ENCODE measurements at regions of chr10 and their contacts with region 1.

Region 1: GRCh38 chr10:80444646-80445319 is 9.3 kb upstream of the TSPAN14 start:
- DNase-seq: peak in 4 of 5 donors; percentile 73 to 83 (median 78)
- H3K4me3 ChIP-seq: no peak overlapping the region
- H3K4me3 Mint-ChIP-seq: peak overlapping the region in 2 of 8 donors; percentile 21 to 32
- H3K27ac ChIP-seq: no peak overlapping the region
- H3K27ac Mint-ChIP-seq: peak overlapping the region; percentile 47 to 88 (median 79)
- H3K4me1 ChIP-seq: peaks cover 32% of the 10 kb centered on the region
- H3K4me1 Mint-ChIP-seq: peaks cover 26 to 60% (median 46%) of the 10 kb centered on the region in 4 donors
- H3K27me3 ChIP-seq: no peaks in the 10 kb centered on the region
- H3K27me3 Mint-ChIP-seq: no peaks in the 10 kb centered on the region

Region 2: DNA sequence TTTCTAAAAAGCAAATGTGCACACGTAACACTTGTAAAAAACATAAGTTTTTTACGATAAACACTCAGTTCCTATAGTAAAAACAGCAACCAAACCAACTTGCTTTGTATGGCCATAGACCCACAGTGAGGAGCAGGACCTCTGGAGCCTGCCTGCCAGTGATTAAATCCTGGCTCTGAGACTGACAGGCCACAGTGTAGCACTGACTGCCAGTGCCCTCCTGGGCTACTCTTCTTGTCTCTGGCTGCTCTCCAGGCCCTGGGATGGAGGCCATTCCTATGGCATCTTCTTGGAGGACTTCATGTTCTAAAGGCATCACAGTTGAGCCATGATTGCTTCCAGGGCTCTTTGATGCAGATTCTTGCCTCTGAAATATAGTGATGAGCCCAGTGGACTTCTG is 389.0 kb before region 1 on chr10:
- CTCF ChIA-PET with region 1: no interaction called
- POLR2A ChIA-PET with region 1: no interaction called
- intact Hi-C with region 1: no loop called
- DNase-seq: no peak
- H3K4me3 ChIP-seq: no peak overlapping the region
- H3K4me3 Mint-ChIP-seq: no peak overlapping the region
- H3K27ac ChIP-seq: no peak overlapping the region
- H3K27ac Mint-ChIP-seq: peak overlapping the region in 1 of 7 donors; percentile 17
- H3K4me1 ChIP-seq: no peaks in the 10 kb centered on the region
- H3K4me1 Mint-ChIP-seq: peaks cover 0 to 10% (median 5%) of the 10 kb centered on the region in 4 donors
- H3K27me3 ChIP-seq: no peaks in the 10 kb centered on the region
- H3K27me3 Mint-ChIP-seq: peaks cover 0 to under 1% of the 10 kb centered on the region in 2 donors

Region 3: GRCh38 chr10:80260295-80261243 is 184.2 kb before region 1 on chr10:
- CTCF ChIA-PET with region 1: no interaction called
- POLR2A ChIA-PET with region 1: no interaction called
- intact Hi-C with region 1: no loop called
- DNase-seq: peak in 4 of 5 donors; percentile 17 to 30 (median 26)
- H3K4me3 ChIP-seq: no peak overlapping the region
- H3K4me3 Mint-ChIP-seq: no peak overlapping the region
- H3K27ac ChIP-seq: no peak overlapping the region
- H3K27ac Mint-ChIP-seq: no peak overlapping the region
- H3K4me1 ChIP-seq: no peaks in the 10 kb centered on the region
- H3K4me1 Mint-ChIP-seq: no peaks in the 10 kb centered on the region
- H3K27me3 ChIP-seq: no peaks in the 10 kb centered on the region
- H3K27me3 Mint-ChIP-seq: peaks cover 1 to 11% of the 10 kb centered on the region in 2 donors

Region 4: DNA sequence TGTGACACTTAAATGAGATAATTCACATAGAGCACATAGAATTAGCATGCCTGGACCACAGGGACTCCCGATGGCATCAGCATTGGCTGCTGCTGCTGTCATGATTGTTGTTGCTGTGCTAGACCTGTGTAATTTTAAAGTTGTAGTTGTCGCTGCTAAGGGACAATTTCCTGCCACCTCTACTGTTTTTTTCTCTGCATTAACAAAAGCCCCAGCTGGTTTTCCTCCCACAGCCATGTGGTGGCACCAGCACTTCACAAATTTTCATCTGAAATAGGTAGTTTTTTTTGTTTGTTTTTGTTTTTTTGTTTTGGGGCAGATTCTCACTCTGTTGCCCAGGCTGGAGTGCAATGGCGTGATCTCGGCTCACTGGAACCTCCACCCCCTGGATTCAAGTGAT is 61.8 kb before region 1 on chr10:
- CTCF ChIA-PET with region 1: interaction called, 14 read pairs
- POLR2A ChIA-PET with region 1: interaction called, 4 read pairs
- intact Hi-C with region 1: loop called (anchors 1 kb)
- DNase-seq: peak in 4 of 5 donors; percentile 50 to 69 (median 62)
- H3K4me3 ChIP-seq: no peak overlapping the region
- H3K4me3 Mint-ChIP-seq: no peak overlapping the region
- H3K27ac ChIP-seq: no peak overlapping the region
- H3K27ac Mint-ChIP-seq: peak overlapping the region in 3 of 7 donors; percentile 2 to 83 (median 2)
- H3K4me1 ChIP-seq: peaks cover 11% of the 10 kb centered on the region
- H3K4me1 Mint-ChIP-seq: peaks cover 7 to 15% (median 12%) of the 10 kb centered on the region in 4 donors
- H3K27me3 ChIP-seq: no peaks in the 10 kb centered on the region
- H3K27me3 Mint-ChIP-seq: peaks cover 0 to 6% of the 10 kb centered on the region in 2 donors

Region 5: DNA sequence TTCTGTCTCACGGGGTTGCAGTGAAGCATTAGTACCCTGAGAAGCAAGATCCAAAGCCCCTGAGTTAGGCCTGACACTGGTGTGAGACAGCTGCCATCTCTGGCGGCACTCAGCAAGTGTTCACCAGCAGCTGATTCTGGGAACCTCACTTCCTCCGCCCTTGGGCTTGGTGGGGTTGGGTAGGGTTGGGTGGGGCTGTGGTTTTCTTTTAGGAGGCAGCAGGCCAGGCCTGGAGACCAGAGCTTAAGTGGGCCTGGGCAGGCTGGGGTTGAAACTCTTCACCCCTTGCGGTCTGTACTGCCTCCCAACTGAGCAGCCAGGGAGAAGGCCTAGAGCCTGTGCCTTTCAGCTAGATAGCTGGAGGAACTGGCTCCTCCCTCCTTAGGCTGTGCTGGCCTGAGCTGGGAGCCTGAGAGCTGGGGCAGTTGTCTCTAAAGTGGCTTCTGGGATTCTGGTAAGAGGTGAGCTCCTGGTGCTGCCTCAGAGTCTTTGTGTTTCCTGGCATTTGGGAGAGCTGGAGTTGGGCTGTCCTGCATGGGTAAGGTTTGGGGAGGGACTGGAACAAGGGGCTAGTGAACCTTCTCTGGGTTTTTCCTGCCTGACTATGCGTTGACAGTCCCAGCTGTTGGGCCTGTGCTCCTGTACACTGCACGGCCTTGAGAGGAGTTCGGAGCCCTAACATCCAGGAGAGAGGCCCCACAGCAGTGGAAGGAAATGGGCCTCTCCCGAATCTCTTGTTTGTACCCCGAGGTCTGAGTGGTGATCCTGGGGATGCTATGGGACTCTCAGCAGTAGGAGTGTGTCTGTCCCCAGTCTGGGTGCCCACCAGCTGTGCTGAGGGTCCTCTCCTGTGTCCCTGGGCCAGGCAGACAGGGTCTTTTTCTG is 14.5 kb after region 1 on chr10:
- CTCF ChIA-PET with region 1: interaction called, 237 read pairs
- POLR2A ChIA-PET with region 1: interaction called, 598 read pairs
- intact Hi-C with region 1: loop called (anchors 1 kb)
- DNase-seq: peak; percentile 51 to 83 (median 66)
- H3K4me3 ChIP-seq: peak overlapping the region; percentile 67 to 76
- H3K4me3 Mint-ChIP-seq: peak overlapping the region; percentile 90 to 100 (median 98)
- H3K27ac ChIP-seq: peak overlapping the region; percentile 83
- H3K27ac Mint-ChIP-seq: peak overlapping the region; percentile 88 to 100 (median 96)
- H3K4me1 ChIP-seq: peaks cover 84% of the 10 kb centered on the region
- H3K4me1 Mint-ChIP-seq: peaks cover 71 to 93% (median 79%) of the 10 kb centered on the region in 4 donors
- H3K27me3 ChIP-seq: no peaks in the 10 kb centered on the region
- H3K27me3 Mint-ChIP-seq: no peaks in the 10 kb centered on the region

Region 6: DNA sequence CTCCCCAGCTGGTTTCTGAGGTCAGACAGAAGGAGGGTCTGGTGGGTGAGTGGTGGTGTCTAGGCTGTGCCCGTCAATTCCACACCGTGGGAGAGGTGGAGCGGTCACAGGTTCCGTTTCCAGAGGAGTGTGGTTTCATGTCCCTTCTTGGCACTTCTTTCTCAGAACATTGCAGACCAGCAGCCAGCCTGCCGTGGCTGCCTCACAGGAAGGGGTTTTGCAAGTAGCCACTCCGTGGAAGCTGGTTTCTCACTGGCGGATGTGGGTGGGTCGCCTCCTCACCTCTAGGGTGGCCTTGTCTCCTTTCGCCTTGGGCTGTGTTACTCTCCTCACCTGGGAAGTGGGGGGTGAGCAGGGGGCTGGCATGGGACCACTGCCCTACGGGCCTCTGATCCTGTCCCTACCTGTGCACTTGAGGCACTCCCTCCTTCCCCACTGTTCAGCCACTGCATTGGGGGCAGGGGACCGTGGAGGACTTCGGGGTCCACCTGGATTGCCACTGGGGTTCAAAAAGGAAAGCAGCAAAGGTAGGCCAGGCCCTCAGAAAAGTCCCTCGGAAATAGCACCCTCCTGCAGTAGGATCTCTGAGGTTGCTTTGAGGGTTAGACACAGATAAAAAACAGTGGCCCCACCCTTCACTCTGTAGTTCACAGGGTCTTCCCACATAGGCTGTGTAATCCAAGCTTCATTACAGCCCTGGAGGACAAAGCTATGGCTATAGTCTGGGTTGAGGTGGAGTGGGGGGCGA is 43.2 kb after region 1 on chr10:
- CTCF ChIA-PET with region 1: interaction called, 12 read pairs
- POLR2A ChIA-PET with region 1: interaction called, 5 read pairs
- intact Hi-C with region 1: no loop called
- DNase-seq: peak; percentile 71 to 81 (median 76)
- H3K4me3 ChIP-seq: peak overlapping the region; percentile 4 to 53
- H3K4me3 Mint-ChIP-seq: peak overlapping the region; percentile 70 to 93 (median 83)
- H3K27ac ChIP-seq: peak overlapping the region; percentile 74
- H3K27ac Mint-ChIP-seq: peak overlapping the region; percentile 83 to 97 (median 97)
- H3K4me1 ChIP-seq: peaks cover 100% of the 10 kb centered on the region
- H3K4me1 Mint-ChIP-seq: peaks cover 86 to 100% (median 93%) of the 10 kb centered on the region in 4 donors
- H3K27me3 ChIP-seq: no peaks in the 10 kb centered on the region
- H3K27me3 Mint-ChIP-seq: no peaks in the 10 kb centered on the region

Region 7: DNA sequence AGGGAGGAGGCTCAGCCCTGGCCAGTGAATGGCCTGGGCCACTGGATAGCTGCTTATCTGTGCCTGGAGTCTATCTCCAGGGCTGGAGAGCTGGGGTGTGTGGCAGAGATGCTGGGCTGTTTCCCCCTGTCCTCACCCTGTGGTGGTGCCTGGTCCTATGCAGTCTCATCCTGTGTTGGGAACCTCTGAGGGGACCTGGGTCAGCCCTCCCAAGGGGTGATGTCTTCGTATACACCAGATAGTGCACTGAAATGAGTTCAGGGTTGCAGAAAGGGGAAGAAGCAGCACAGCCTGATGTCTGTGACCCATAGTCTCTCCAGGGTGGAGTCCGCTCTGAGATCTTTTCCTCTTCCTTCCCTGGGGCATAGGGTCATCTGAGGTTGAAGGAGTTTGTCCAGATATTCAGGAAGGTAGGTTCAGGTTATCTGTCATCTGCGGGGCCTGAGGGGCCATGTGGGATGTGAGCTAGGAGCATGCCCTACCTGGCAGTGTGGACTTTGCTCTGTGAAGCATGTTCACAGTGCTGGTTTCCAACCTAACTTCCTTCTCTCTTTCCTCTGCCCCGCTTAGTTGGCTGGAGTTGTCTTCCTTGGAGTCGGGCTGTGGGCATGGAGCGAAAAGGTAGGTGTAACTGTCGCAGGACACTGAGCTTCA is 59.5 kb after region 1 on chr10:
- CTCF ChIA-PET with region 1: interaction called, 814 read pairs
- POLR2A ChIA-PET with region 1: interaction called, 713 read pairs
- intact Hi-C with region 1: loop called (anchors 1 kb)
- DNase-seq: no peak
- H3K4me3 ChIP-seq: no peak overlapping the region
- H3K4me3 Mint-ChIP-seq: peak overlapping the region in 5 of 8 donors; percentile 7 to 66 (median 47)
- H3K27ac ChIP-seq: peak overlapping the region; percentile 51
- H3K27ac Mint-ChIP-seq: peak overlapping the region; percentile 83 to 94 (median 90)
- H3K4me1 ChIP-seq: peaks cover 69% of the 10 kb centered on the region
- H3K4me1 Mint-ChIP-seq: peaks cover 61 to 79% (median 69%) of the 10 kb centered on the region in 4 donors
- H3K27me3 ChIP-seq: no peaks in the 10 kb centered on the region
- H3K27me3 Mint-ChIP-seq: no peaks in the 10 kb centered on the region

Region 8: DNA sequence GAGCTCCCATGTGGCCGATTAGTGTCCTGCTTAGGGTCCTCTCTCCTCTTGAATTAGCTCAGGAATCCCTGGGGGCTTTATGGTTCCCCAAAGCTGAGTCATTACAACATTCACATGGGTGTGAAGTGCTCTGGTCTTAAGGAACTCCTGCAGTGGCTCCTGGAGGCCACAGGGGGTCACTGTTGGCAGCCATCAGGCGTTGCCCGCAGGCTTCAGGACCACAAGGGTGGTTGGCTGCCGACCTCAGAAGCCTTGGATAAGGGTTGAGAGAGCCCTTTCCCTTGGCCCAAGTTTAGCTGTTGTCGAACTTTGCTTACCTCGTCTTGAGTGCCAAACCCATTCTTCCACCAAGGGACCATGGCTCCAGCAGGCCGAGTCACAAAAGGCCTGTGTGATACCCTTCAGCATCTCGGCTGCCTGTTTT is 154.7 kb after region 1 on chr10:
- CTCF ChIA-PET with region 1: interaction called, 6 read pairs
- POLR2A ChIA-PET with region 1: no interaction called
- intact Hi-C with region 1: loop called (anchors 5 kb)
- DNase-seq: peak in 2 of 5 donors; percentile 2 to 13
- H3K4me3 ChIP-seq: no peak overlapping the region
- H3K4me3 Mint-ChIP-seq: no peak overlapping the region
- H3K27ac ChIP-seq: no peak overlapping the region
- H3K27ac Mint-ChIP-seq: no peak overlapping the region
- H3K4me1 ChIP-seq: no peaks in the 10 kb centered on the region
- H3K4me1 Mint-ChIP-seq: no peaks in the 10 kb centered on the region
- H3K27me3 ChIP-seq: no peaks in the 10 kb centered on the region
- H3K27me3 Mint-ChIP-seq: no peaks in the 10 kb centered on the region

Region 9: GRCh38 chr10:81018708-81019365 is 574.1 kb after region 1 on chr10:
- CTCF ChIA-PET with region 1: no interaction called
- POLR2A ChIA-PET with region 1: no interaction called
- intact Hi-C with region 1: loop called (anchors 5 kb)
- DNase-seq: peak in 2 of 5 donors; percentile 1 to 6
- H3K4me3 ChIP-seq: no peak overlapping the region
- H3K4me3 Mint-ChIP-seq: no peak overlapping the region
- H3K27ac ChIP-seq: no peak overlapping the region
- H3K27ac Mint-ChIP-seq: no peak overlapping the region
- H3K4me1 ChIP-seq: no peaks in the 10 kb centered on the region
- H3K4me1 Mint-ChIP-seq: peaks cover 0 to 1% (median 0%) of the 10 kb centered on the region in 4 donors
- H3K27me3 ChIP-seq: no peaks in the 10 kb centered on the region
- H3K27me3 Mint-ChIP-seq: peaks cover 2 to 3% of the 10 kb centered on the region in 2 donors

Region 10: GRCh38 chr10:81502677-81503359 is 1058.0 kb after region 1 on chr10:
- CTCF ChIA-PET with region 1: no interaction called
- POLR2A ChIA-PET with region 1: no interaction called
- intact Hi-C with region 1: no loop called
- DNase-seq: no peak
- H3K4me3 ChIP-seq: no peak overlapping the region
- H3K4me3 Mint-ChIP-seq: no peak overlapping the region
- H3K27ac ChIP-seq: no peak overlapping the region
- H3K27ac Mint-ChIP-seq: no peak overlapping the region
- H3K4me1 ChIP-seq: no peaks in the 10 kb centered on the region
- H3K4me1 Mint-ChIP-seq: no peaks in the 10 kb centered on the region
- H3K27me3 ChIP-seq: no peaks in the 10 kb centered on the region
- H3K27me3 Mint-ChIP-seq: no peaks in the 10 kb centered on the region